Heart left ventricle (tissue), 16 donors: ENCODE measurements at regions of chr10 and their contacts with region 1.

Region 1: GRCh38 chr10:29297678-29298077 is 8.8 kb downstream of the LYZL1 start:
- DNase-seq: no peak
- ATAC-seq: no peak
- H3K4me3 ChIP-seq: no peak overlapping the region
- H3K27ac ChIP-seq: no peak overlapping the region
- H3K4me1 ChIP-seq: no peaks in the 10 kb centered on the region
- H3K27me3 ChIP-seq: peaks cover 0 to 3% (median 0%) of the 10 kb centered on the region in 9 donors
- CTCF ChIP-seq: no peak
- POLR2A ChIP-seq: no peak

Region 2: DNA sequence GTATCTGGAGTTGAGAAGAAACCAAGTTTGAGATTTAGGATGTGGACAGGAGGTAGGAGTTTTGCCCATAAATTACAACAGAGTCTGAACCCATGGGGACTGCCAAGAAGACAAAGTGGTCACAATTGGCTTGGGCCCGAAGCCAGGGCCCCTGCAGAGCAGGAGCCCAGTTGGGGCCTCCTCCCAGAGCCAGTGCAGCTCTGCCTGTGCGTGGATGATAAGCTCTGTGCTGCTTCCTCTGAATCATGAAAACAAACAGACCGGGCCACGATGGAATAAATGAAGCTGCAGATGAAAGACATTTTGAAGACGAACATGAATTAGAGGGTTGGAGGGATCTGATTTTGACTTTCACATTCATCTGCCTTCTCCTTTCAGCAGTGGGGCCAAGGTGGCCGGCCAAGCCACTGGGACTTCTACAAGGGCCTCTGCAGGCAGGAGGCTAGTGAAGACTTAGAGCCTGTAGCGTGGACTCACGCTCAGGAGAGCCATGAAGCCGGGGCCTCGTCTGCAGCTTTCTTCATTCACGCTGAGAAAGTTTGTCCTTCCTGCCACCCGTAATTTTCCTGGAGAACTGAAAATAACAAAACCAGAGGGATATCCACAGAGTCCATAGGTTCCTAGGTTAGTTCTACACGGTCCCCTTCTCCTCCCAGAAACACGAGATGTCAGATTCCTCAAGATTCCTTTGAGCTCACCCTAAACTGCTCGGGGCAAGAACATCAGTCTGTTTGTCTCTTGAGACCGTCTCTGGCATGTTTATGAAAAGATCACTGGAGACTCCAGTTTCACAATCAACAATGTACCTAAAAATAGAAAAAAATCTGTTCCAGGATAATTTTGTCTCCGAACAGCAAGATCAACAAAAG is 165.5 kb before region 1 on chr10:
- intact Hi-C with region 1: loop called in 3 of 10 experiments (anchors 10 kb)
- DNase-seq: peak in 4 of 5 donors; percentile 16 to 64 (median 38)
- ATAC-seq: peak; percentile 23 to 86 (median 74)
- H3K4me3 ChIP-seq: no peak overlapping the region
- H3K27ac ChIP-seq: peak overlapping the region in 6 of 12 donors; percentile 8 to 31 (median 18)
- H3K4me1 ChIP-seq: peaks cover 0 to 17% (median 4%) of the 10 kb centered on the region in 12 donors
- H3K27me3 ChIP-seq: peaks cover 0 to under 1% (median 0%) of the 10 kb centered on the region in 9 donors
- CTCF ChIP-seq: no peak
- POLR2A ChIP-seq: no peak